Right lobe of liver (tissue), 6 donors: ENCODE measurements at regions of chr9 and their contacts with region 1.

Region 1: DNA sequence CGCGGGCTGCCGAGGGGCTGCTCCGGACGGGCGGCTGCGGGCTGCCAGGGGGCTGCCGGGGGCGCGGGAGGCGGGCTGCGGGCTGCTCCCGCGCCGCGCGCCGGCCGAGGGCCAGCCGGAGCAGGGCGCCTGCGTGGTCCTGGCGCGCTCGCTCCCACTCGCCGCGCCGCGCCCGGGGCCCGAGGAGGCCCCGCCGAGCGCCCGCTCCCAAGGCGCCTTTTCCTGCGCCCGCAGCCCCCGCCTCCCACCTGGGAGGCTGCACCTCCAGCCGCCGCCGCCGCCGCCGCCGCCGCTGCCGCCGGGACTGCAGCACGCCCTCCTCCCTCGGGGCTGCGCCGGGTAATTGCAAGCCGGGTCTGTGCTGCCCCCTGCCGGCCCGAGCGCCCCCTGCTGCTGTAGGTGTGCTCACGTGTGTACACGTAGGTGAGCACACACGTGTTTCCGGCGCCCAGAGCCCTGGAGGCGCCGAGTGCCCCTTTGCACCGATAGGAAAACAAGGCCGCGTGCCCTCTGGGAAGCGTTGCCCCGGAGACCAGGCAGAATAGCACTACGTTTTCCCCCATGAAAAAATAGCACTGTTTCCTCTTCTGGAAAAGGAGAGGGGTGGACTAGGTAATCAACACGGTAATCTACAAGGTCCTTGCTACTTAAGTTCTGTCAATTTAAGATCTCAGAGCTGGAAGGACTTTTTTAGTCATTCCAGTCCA is at the start of gene EPB41L4B:
- DNase-seq: peak; percentile 92 to 95 (median 95)
- ATAC-seq: peak; percentile 77 to 89 (median 84)
- H3K4me3 ChIP-seq: peak within 1 kb of the TSS; percentile 52 to 71 (median 65)
- H3K27ac ChIP-seq: peak within 1 kb of the TSS in 2 of 3 donors; percentile 88 to 90
- H3K4me1 ChIP-seq: peaks cover 0 to 21% (median 11%) of the 10 kb centered on the region in 4 donors
- H3K27me3 ChIP-seq: no peaks in the 10 kb centered on the region
- CTCF ChIP-seq: peak; percentile 95 to 100 (median 98)
- POLR2A ChIP-seq: no peak
- total RNA-seq, gene EPB41L4B: 29.0 to 89.0 (median 32.4) TPM

Region 2: DNA sequence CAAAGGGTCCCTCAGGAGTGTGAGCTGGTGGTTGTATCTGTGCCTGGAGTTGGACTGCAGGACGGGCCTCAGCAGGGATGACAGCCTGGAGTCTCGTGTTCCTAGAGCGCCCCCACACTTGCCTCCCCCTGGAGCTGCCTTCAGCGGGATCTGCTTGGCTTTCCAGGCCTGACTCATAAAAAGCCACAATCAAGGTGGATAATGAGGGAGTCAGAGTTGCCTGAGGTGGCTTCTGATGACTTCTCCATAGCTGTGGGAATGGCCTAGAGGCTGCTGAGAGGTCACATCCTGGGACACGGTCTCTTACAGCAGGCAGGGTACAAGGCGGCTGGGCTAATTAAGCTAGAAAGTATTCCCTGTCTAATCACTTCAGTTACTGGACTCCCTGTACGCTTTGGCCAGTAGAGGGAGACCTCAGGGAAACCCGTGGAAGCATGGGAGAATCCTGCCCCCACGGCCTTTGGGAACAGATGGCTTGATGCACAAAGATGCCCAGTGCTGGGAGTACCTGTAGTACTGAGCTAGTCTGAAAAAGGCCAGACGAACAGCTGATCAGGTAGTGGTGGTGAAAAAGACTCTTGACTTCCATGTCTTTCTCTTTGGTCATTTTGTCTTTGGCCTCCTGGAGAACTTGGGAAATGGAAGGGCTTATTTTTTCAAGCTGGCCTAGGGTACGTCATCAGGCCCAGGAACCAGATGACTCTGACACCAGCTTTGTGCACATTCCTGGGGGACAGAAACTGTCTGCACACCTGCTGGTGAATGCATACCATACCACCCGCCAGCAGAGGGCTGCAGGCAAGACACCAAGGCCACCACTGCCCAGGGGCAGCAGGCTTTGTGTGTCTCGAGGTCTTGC is 137.7 kb before region 1 on chr9:
- intact Hi-C with region 1: loop called (anchors 10 kb)
- DNase-seq: peak in 2 of 3 donors; percentile 40 to 58
- ATAC-seq: peak; percentile 79 to 87 (median 84)
- H3K4me3 ChIP-seq: no peak overlapping the region
- H3K27ac ChIP-seq: no peak overlapping the region
- H3K4me1 ChIP-seq: no peaks in the 10 kb centered on the region
- H3K27me3 ChIP-seq: no peaks in the 10 kb centered on the region
- CTCF ChIP-seq: peak; percentile 37 to 51 (median 45)
- POLR2A ChIP-seq: no peak

Region 3: DNA sequence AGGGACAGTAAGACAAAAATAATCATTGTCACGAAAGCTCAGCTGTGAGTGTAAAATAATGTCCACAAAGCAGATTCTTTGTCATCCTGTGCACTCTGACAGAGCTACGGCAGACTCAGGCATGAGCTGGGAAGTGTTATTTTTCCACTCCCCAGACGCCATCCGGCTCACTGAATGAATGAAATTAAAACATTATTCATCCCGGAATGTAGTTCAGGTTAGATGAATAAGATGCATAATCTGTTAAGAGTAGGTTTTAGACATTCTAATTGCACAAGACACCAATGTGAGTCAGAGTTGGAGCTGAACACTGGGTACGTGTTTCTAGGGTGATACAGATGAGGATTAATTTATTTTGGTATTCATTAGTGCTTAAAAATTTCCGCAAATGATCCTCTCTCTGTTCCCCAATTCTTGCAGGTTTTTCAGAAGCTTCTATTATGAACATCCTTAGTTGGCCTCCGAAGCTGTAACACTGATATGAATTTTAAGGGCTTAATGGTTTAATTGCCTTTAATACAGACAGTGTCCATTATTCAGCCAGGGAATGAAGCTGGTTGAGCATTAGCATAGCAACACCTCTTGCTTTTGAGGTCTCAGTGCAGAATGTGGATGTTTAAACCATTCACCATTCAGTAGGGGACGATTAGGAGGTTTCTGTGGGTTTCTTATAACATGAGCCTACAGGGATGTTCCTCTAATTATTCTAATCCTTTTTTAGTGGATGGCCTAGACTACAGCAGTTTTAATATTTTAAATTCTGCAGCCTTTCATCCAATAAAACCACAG is 88.3 kb before region 1 on chr9:
- intact Hi-C with region 1: no loop called
- DNase-seq: no peak
- ATAC-seq: no peak
- H3K4me3 ChIP-seq: no peak overlapping the region
- H3K27ac ChIP-seq: no peak overlapping the region
- H3K4me1 ChIP-seq: no peaks in the 10 kb centered on the region
- H3K27me3 ChIP-seq: no peaks in the 10 kb centered on the region
- CTCF ChIP-seq: no peak
- POLR2A ChIP-seq: no peak

Region 4: DNA sequence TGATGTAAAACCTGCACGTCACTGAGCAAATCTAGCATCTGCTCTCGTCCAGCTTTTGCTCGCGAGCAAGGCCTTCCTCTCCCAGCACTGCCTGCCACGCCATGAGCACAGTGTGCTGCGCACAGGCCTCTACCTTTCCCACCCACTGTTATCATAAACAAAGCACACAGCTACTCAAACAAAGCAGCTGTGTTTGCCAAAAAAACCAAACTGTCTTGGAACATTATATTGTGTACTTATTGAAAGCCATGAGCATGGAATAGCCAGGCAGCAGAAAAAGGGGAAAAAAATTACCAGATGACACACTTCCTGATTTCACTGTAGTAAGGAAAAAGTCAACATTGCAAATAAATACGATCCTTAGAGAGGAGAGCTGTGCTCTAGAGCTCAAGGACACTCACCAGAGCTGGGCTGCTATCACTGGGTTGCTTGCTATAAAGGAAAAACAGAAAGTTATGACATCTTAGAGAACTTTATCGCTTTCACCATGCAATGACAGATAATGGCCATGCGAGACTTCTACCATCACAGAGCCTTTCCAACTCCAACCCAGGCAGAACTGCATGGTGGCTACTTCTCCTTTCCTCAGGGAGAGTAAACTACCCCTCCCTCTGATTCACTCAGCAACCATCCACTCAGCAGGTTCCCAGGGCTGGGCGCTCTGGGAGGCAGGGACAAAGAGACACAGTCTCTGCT is 69.7 kb before region 1 on chr9:
- intact Hi-C with region 1: loop called in 1 of 2 experiments (anchors 5 kb)
- DNase-seq: peak; percentile 39 to 74 (median 59)
- ATAC-seq: peak; percentile 37 to 54 (median 51)
- H3K4me3 ChIP-seq: no peak overlapping the region
- H3K27ac ChIP-seq: peak overlapping the region; percentile 59 to 98 (median 88)
- H3K4me1 ChIP-seq: peaks cover 0 to 90% (median 42%) of the 10 kb centered on the region in 4 donors
- H3K27me3 ChIP-seq: no peaks in the 10 kb centered on the region
- CTCF ChIP-seq: no peak
- POLR2A ChIP-seq: peak; percentile 27